WTC11 (cell line): ENCODE measurements at regions of chr1 and their contacts with region 1.

Region 1: DNA sequence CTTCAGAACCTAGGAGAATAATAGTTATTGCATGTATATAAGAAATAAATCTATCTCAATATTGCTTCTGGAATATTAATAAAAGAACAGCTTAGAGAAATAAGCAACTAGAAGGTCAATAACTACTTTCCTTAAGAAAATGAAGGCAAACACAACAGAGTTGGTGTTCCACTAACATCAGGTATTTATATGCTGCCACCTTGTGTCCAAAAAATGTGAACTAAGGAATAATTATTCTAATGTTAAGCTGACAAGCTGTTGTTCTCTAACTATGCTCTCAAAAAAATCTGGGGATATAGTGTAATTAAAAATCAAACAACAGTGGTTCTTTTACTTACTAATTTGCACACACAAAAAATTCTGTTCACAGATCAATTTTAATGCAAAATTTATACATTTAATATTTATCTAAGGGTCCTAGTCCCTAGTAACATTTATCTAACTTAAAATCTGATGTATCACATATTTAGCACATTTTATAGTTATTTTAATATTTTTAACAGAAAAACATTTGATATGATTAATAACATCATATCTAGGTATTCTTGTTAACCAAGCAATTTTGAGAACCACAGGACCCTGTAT is 39.6 kb downstream of the UCHL5 start:
- DNase-seq: no peak
- ATAC-seq: 0 out of 2 replicates have a peak, but pooled peaks have one; percentile 34
- H3K4me3 Mint-ChIP-seq: no peak overlapping the region
- H3K27ac Mint-ChIP-seq: no peak overlapping the region
- H3K4me1 Mint-ChIP-seq: peaks cover 5% of the 10 kb centered on the region
- H3K27me3 Mint-ChIP-seq: no peaks in the 10 kb centered on the region
- CTCF ChIP-seq: no peak

Region 2: GRCh38 chr1:192808518-192809306 is 210.8 kb before region 1 on chr1 and contains the start of gene RGS2:
- CTCF ChIA-PET with region 1: interaction called, 16 read pairs
- POLR2A ChIA-PET with region 1: no interaction called
- DNase-seq: peak; percentile 91
- ATAC-seq: peak; percentile 97
- H3K4me3 Mint-ChIP-seq: peak within 1 kb of the TSS; percentile 91
- H3K27ac Mint-ChIP-seq: peak within 1 kb of the TSS; percentile 85
- H3K4me1 Mint-ChIP-seq: peaks cover 26% of the 10 kb centered on the region
- H3K27me3 Mint-ChIP-seq: peaks cover 16% of the 10 kb centered on the region
- CTCF ChIP-seq: no peak
- total RNA-seq, gene RGS2: 13.1 to 19.1 TPM (median 18.7 TPM) in 3 replicates

Region 3: GRCh38 chr1:193005785-193006184 is 13.7 kb before region 1 on chr1:
- CTCF ChIA-PET with region 1: no interaction called
- POLR2A ChIA-PET with region 1: no interaction called
- DNase-seq: no peak
- ATAC-seq: no peak
- H3K4me3 Mint-ChIP-seq: no peak overlapping the region
- H3K27ac Mint-ChIP-seq: no peak overlapping the region
- H3K4me1 Mint-ChIP-seq: no peaks in the 10 kb centered on the region
- H3K27me3 Mint-ChIP-seq: no peaks in the 10 kb centered on the region
- CTCF ChIP-seq: no peak

Region 4: DNA sequence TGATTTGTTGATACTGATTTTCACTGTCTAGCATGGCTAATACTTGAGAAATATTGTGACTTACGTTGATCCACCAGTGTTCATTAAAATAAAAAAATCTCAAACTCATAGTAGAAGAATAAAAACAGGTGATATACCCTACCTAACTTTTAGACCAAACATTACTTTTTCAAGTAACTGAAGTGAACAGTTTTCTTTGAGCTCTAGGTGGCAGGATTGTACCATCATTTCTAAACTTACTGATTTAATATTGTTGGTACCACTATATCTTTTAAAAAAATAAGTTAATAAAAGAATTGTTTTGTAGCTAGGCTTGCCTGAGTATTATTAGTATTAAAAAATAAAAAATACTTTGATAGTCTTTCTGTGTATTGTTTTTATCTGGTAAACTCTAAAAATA is 123.8 kb after region 1 on chr1:
- CTCF ChIA-PET with region 1: no interaction called
- POLR2A ChIA-PET with region 1: no interaction called
- DNase-seq: no peak
- ATAC-seq: no peak
- H3K4me3 Mint-ChIP-seq: no peak overlapping the region
- H3K27ac Mint-ChIP-seq: no peak overlapping the region
- H3K4me1 Mint-ChIP-seq: peaks cover 24% of the 10 kb centered on the region
- H3K27me3 Mint-ChIP-seq: no peaks in the 10 kb centered on the region
- CTCF ChIP-seq: no peak